Prostate gland (tissue), 2 donors: ENCODE measurements at regions of chr19 and their contacts with region 1.

Region 1: GRCh38 chr19:55117636-55118391 is at the start of gene PPP1R12C:
- DNase-seq: peak; percentile 99
- H3K4me3 ChIP-seq: peak within 1 kb of the TSS; percentile 61 to 69
- H3K27ac ChIP-seq: peak within 1 kb of the TSS; percentile 72 to 78
- H3K4me1 ChIP-seq: peaks cover 13% of the 10 kb centered on the region
- H3K27me3 ChIP-seq: no peaks in the 10 kb centered on the region
- CTCF ChIP-seq: peak in 2 of 4 experiments; percentile 39 to 50
- POLR2A ChIP-seq: peak; percentile 38
- total RNA-seq, gene PPP1R12C: 67.8 to 164 TPM

Region 2: DNA sequence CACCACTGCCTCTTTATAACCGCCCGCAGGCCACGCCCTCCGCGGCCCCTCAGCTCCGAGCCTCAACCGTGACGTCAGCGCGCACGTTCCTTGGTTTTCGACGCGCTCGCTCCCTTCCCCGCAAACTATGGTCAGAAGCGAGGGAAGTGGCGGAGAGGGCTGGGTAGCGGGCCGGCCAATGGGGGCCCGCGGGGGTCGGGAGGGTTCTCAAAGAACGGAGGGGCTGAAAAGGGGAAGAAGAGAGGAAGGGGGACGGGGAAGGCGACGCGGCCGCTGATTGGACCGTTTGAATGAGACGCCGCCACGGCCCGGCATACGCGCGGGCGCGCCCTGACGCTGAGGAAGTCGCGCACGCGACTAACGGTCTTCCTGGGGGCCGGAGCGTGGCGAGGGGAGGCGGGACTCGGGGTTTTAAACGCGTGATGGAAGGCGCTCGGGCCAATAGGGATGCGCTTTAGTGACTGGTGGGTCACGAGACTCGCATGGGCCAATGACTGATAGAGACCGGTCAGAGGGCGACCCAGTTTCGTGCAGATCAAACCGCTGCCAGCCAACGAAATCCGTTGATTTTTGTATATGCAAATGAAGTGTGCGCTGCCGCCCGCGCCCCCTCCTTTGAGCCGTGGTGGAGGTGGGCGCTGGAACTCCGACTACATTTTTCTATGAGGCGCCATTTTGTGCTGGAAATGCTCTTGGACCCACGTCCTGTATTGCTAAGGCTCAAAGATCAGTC is 290.2 kb after region 1 on chr19:
- intact Hi-C with region 1: loop called (anchors 5 kb)
- DNase-seq: peak; percentile 98
- H3K4me3 ChIP-seq: peak overlapping the region; percentile 89 to 95
- H3K27ac ChIP-seq: peak overlapping the region; percentile 91 to 97
- H3K4me1 ChIP-seq: peaks cover 8% of the 10 kb centered on the region
- H3K27me3 ChIP-seq: no peaks in the 10 kb centered on the region
- CTCF ChIP-seq: no peak
- POLR2A ChIP-seq: no peak

Region 3: GRCh38 chr19:55599468-55600279 is 481.9 kb after region 1 on chr19 and contains the start of gene FIZ1:
- intact Hi-C with region 1: loop called (anchors 10 kb)
- DNase-seq: peak; percentile 98
- H3K4me3 ChIP-seq: peak within 1 kb of the TSS; percentile 53 to 87
- H3K27ac ChIP-seq: peak within 1 kb of the TSS; percentile 92 to 98
- H3K4me1 ChIP-seq: peaks cover 4% of the 10 kb centered on the region
- H3K27me3 ChIP-seq: no peaks in the 10 kb centered on the region
- CTCF ChIP-seq: no peak
- POLR2A ChIP-seq: no peak
- total RNA-seq, gene FIZ1: 14.8 to 16.4 TPM

Region 4: GRCh38 chr19:55653758-55654539 is 536.1 kb after region 1 on chr19:
- intact Hi-C with region 1: loop called (anchors 10 kb)
- DNase-seq: peak; percentile 99
- H3K4me3 ChIP-seq: peak overlapping the region; percentile 88 to 94
- H3K27ac ChIP-seq: peak overlapping the region; percentile 98 to 99
- H3K4me1 ChIP-seq: peaks cover 27% of the 10 kb centered on the region
- H3K27me3 ChIP-seq: no peaks in the 10 kb centered on the region
- CTCF ChIP-seq: peak; percentile 98 to 100 (median 100)
- POLR2A ChIP-seq: peak; percentile 88